ENCODE measurements at regions of chr10 and their contacts with region 1.

Region 1: DNA sequence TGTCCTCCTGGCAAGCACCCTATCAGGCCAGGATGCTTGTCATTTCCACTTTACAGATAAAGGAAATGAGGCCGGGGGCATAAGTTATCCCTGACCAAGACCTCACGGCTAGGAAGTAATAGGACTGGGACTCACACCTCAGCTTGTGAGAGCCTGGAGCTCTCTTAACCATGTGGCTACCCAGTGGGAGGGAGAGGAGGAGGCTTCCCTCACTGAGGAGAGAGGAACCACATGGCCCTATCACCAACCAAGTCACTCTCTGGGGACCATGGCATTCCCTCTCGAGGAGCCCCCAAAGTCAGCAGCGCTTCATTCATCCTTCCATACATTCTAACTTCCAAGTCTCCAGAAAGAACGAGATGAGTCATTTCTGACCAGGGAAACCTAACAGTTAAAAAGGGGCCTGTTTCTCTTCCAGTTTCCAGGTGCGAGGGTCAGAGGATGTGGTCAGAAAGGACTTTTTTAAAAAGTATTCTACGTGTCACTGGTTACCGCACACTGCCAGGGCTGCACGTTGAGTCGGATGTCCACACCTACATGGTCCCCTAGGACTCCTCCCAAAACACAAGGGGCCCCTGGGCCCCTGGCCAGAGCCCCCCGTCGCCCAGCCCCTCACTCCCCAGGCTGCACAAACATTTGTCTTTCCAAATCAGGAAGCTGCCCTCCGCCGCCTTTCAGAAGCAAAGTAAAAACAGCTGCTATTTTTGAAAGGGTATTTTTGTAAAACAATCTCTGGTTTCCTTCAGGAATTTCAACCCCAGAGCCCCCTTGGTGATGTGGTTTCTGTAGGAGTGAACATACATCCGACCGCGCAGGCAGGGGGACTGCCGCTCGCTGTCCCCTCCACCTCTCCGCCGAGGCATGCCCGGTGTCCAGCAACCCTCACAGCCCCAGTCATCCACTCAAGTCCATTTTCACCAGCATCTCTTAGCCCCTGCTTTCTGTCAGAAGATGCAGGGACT is 128.2 kb upstream of the CHST15 start:
- DNase-seq: no peak
- ATAC-seq: no peak
- H3K4me3 ChIP-seq: no peak overlapping the region
- H3K4me3 Mint-ChIP-seq: peak overlapping the region in 1 of 10 donors; percentile 37
- H3K27ac ChIP-seq: no peak overlapping the region
- H3K27ac Mint-ChIP-seq: peak overlapping the region in 1 of 9 donors; percentile 33
- H3K4me1 ChIP-seq: no peaks in the 10 kb centered on the region
- H3K4me1 Mint-ChIP-seq: peaks cover 0 to 25% (median 0%) of the 10 kb centered on the region in 7 donors
- H3K27me3 ChIP-seq: no peaks in the 10 kb centered on the region
- H3K27me3 Mint-ChIP-seq: peaks cover 0 to 14% (median 5%) of the 10 kb centered on the region in 5 donors

Region 2: GRCh38 chr10:122515588-122516231 is 1705.9 kb before region 1 on chr10:
- CTCF ChIA-PET with region 1: no interaction called
- POLR2A ChIA-PET with region 1: no interaction called
- intact Hi-C with region 1: no loop called
- DNase-seq: peak in 4 of 9 donors; percentile 4 to 65 (median 14)
- ATAC-seq: peak; percentile 78
- H3K4me3 ChIP-seq: no peak overlapping the region
- H3K4me3 Mint-ChIP-seq: peak overlapping the region in 7 of 10 donors; percentile 2 to 58 (median 29)
- H3K27ac ChIP-seq: no peak overlapping the region
- H3K27ac Mint-ChIP-seq: peak overlapping the region in 1 of 9 donors; percentile 54
- H3K4me1 ChIP-seq: peaks cover 4 to 39% of the 10 kb centered on the region in 2 donors
- H3K4me1 Mint-ChIP-seq: peaks cover 10 to 27% (median 20%) of the 10 kb centered on the region in 7 donors
- H3K27me3 ChIP-seq: no peaks in the 10 kb centered on the region
- H3K27me3 Mint-ChIP-seq: peaks cover 0 to 2% (median 0%) of the 10 kb centered on the region in 5 donors

Region 3: DNA sequence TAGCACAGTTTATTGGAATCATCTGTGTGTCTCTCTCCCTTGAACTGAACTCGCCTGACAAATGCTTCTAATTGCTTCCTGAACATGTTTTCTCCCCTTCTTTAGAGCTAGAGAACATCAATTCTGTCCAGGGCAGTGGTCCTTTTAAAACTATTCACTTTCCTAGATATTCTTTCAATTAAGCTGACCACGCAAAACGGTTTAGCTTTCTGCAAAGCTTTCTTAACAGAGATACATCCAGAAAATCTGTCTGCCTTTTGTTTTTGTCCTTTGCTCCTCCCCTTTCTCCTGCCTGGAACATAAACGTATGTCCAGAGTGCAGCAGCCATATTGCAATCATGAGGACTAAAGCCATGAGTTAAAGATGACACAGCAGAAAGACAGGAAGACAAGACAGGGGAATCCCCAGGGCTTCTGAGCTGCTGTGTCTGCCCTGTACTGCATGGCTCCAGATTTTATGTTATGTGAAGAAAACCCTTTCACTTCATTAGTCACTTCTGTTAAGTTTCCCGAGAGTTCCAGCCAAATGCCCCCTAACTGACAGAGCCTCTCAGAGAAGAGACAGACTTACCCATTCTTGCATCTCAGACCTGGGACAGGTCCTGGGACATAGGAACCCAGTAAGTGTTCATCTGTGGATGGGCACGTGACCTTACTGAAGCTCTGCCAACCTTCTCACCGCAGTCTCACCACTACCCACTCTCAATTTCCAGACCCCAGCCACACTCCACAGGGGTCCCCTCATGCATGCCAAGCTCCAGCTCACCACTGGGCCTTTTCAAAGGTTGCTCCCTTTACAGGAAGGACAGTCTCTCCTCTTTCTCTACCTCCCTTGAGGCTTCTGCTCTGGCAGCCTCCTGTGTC is 295.0 kb before region 1 on chr10:
- CTCF ChIA-PET with region 1: no interaction called
- POLR2A ChIA-PET with region 1: no interaction called
- intact Hi-C with region 1: no loop called
- DNase-seq: no peak
- ATAC-seq: peak; percentile 54
- H3K4me3 ChIP-seq: no peak overlapping the region
- H3K4me3 Mint-ChIP-seq: no peak overlapping the region
- H3K27ac ChIP-seq: no peak overlapping the region
- H3K27ac Mint-ChIP-seq: peak overlapping the region in 1 of 9 donors; percentile 34
- H3K4me1 ChIP-seq: no peaks in the 10 kb centered on the region
- H3K4me1 Mint-ChIP-seq: peaks cover 0 to 10% (median 0%) of the 10 kb centered on the region in 7 donors
- H3K27me3 ChIP-seq: no peaks in the 10 kb centered on the region
- H3K27me3 Mint-ChIP-seq: peaks cover 3 to 48% (median 26%) of the 10 kb centered on the region in 5 donors

Region 4: DNA sequence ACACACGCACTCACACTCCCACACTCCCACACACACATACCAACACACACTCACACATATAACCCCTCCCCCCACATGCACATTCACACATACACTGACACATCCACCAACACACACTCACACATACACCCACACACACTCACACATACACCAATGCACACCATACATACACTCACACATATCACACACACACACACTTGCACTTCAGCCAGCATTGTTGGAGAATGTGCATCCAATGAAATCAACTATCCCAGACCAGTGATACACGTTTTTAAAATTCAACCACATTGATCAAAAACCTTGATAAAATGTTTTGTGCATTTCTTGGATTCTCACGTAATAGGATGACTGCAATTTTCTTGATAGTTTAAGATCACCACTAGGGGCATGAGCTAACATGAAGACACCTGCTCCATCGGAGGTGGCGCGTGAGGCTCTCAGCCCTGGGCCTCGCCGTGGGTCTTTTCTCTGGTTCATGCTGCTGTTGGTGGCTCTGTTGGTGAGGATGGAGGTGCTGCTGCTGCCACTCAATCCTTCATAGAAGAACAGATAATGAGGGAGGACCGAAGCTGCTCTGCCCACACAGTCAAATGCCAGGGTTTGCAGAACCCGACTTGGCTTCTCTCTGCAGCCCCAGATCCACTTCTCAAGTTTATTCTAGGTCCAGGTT is 96.1 kb before region 1 on chr10:
- CTCF ChIA-PET with region 1: no interaction called
- POLR2A ChIA-PET with region 1: no interaction called
- intact Hi-C with region 1: loop called in 1 of 2 experiments (anchors 10 kb)
- DNase-seq: peak in 4 of 9 donors; percentile 10 to 19 (median 12)
- ATAC-seq: no peak
- H3K4me3 ChIP-seq: no peak overlapping the region
- H3K4me3 Mint-ChIP-seq: no peak overlapping the region
- H3K27ac ChIP-seq: no peak overlapping the region
- H3K27ac Mint-ChIP-seq: no peak overlapping the region
- H3K4me1 ChIP-seq: no peaks in the 10 kb centered on the region
- H3K4me1 Mint-ChIP-seq: no peaks in the 10 kb centered on the region
- H3K27me3 ChIP-seq: no peaks in the 10 kb centered on the region
- H3K27me3 Mint-ChIP-seq: peaks cover 0 to under 1% (median 0%) of the 10 kb centered on the region in 5 donors

Region 5: DNA sequence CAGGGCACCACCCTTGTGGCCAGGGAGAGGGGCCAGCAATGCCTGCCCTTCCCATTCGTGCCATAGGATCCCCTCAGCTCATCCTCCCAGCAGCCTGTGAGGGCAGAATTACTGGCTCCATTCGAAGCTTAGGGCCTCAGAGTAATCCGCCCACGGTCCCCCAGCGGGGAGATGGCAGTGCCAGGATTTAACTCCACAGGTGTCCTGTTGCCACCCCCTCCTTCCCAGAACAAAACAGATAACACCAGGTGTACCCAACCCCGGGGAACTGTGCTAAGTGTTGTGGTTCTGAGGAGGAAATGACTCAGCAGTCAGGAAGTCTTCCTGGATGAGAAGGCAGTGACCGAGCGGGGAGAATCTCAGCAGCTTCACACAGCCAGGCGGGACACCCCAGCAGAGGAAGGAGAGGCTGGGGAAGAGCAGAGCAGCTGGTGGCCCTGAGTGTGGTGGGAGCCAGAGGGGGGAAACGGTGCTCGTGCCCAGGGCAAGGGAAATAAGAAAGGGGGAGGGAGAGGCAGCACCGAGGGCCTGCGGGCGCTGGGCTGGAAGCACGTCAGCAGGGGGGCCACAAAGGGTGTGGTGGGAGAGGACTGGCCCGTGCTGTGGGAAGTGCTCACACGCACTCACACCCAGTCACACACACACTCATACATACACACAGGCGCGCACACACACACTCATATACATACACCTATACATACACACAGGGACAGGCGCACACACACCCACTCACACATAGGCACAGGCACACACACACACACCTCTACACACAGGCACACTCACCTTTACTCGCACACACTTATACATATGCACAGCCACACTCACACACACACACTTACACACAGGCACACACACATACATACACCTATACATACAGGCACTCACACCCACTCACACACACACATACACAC is 68.5 kb before region 1 on chr10:
- CTCF ChIA-PET with region 1: no interaction called
- POLR2A ChIA-PET with region 1: no interaction called
- intact Hi-C with region 1: loop called in 1 of 2 experiments (anchors 5 kb)
- DNase-seq: peak in 7 of 9 donors; percentile 9 to 44 (median 29)
- ATAC-seq: peak; percentile 78
- H3K4me3 ChIP-seq: no peak overlapping the region
- H3K4me3 Mint-ChIP-seq: no peak overlapping the region
- H3K27ac ChIP-seq: no peak overlapping the region
- H3K27ac Mint-ChIP-seq: no peak overlapping the region
- H3K4me1 ChIP-seq: peaks cover 4 to 19% of the 10 kb centered on the region in 2 donors
- H3K4me1 Mint-ChIP-seq: peaks cover 0 to 12% (median 7%) of the 10 kb centered on the region in 7 donors
- H3K27me3 ChIP-seq: no peaks in the 10 kb centered on the region
- H3K27me3 Mint-ChIP-seq: peaks cover 9 to 24% (median 13%) of the 10 kb centered on the region in 5 donors

Region 6: DNA sequence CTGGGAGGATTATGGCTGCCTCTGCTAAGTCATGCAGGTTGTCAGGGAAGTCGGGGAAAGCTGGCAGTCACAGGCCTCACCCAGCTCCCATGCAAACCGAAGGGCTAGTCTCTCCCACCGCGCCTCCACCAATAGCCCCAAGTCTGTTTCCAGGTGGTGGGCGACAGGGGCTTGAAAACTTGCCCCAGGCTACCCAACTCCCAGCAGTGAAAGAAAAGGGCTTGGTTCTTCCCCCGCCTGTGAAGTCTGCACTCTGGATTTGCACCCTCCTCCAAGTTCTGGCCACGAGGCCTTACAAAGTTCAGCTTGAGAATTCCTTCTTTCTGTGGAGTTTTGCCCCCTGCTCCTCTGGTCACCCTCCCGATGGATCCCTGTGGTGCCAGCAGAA is 28.3 kb before region 1 on chr10:
- CTCF ChIA-PET with region 1: no interaction called
- POLR2A ChIA-PET with region 1: no interaction called
- intact Hi-C with region 1: loop called in 1 of 2 experiments (anchors 1 kb)
- DNase-seq: no peak
- ATAC-seq: no peak
- H3K4me3 ChIP-seq: no peak overlapping the region
- H3K4me3 Mint-ChIP-seq: no peak overlapping the region
- H3K27ac ChIP-seq: no peak overlapping the region
- H3K27ac Mint-ChIP-seq: no peak overlapping the region
- H3K4me1 ChIP-seq: no peaks in the 10 kb centered on the region
- H3K4me1 Mint-ChIP-seq: peaks cover 0 to 5% (median 0%) of the 10 kb centered on the region in 7 donors
- H3K27me3 ChIP-seq: no peaks in the 10 kb centered on the region
- H3K27me3 Mint-ChIP-seq: peaks cover 21 to 54% (median 34%) of the 10 kb centered on the region in 5 donors

Region 7: GRCh38 chr10:124354411-124355382 is 133.1 kb after region 1 on chr10:
- CTCF ChIA-PET with region 1: no interaction called
- POLR2A ChIA-PET with region 1: no interaction called
- intact Hi-C with region 1: loop called in 1 of 2 experiments (anchors 10 kb)
- DNase-seq: peak in 6 of 9 donors; percentile 2 to 30 (median 16)
- ATAC-seq: peak; percentile 83
- H3K4me3 ChIP-seq: peak overlapping the region; percentile 67
- H3K4me3 Mint-ChIP-seq: peak overlapping the region; percentile 82 to 93 (median 89)
- H3K27ac ChIP-seq: peak overlapping the region; percentile 16
- H3K27ac Mint-ChIP-seq: peak overlapping the region in 7 of 9 donors; percentile 26 to 79 (median 63)
- H3K4me1 ChIP-seq: no peaks in the 10 kb centered on the region
- H3K4me1 Mint-ChIP-seq: peaks cover 0 to 15% (median 11%) of the 10 kb centered on the region in 7 donors
- H3K27me3 ChIP-seq: no peaks in the 10 kb centered on the region
- H3K27me3 Mint-ChIP-seq: peaks cover 0 to 5% (median 0%) of the 10 kb centered on the region in 5 donors

Region 8: GRCh38 chr10:124688889-124689670 is 467.4 kb after region 1 on chr10:
- CTCF ChIA-PET with region 1: no interaction called
- POLR2A ChIA-PET with region 1: no interaction called
- intact Hi-C with region 1: no loop called
- DNase-seq: peak in 1 of 9 donors; percentile 61
- ATAC-seq: peak; percentile 87
- H3K4me3 ChIP-seq: no peak overlapping the region
- H3K4me3 Mint-ChIP-seq: peak overlapping the region in 1 of 10 donors; percentile 69
- H3K27ac ChIP-seq: no peak overlapping the region
- H3K27ac Mint-ChIP-seq: peak overlapping the region in 6 of 9 donors; percentile 15 to 88 (median 30)
- H3K4me1 ChIP-seq: peaks cover 24 to 90% of the 10 kb centered on the region in 2 donors
- H3K4me1 Mint-ChIP-seq: peaks cover 39 to 73% (median 49%) of the 10 kb centered on the region in 7 donors
- H3K27me3 ChIP-seq: no peaks in the 10 kb centered on the region
- H3K27me3 Mint-ChIP-seq: no peaks in the 10 kb centered on the region

Measured in naive thymus-derived CD4-positive, alpha-beta T cell (primary cell).